Activated T-helper 2 cell treated with anti-CD3 and anti-CD28 coated beads, Interferon-gamma antibody, Interleukin-2, Interleukin-4, amounts not matched to agents 10 μg/mL and 5 μg/mL and 100 μg/mL, durations not matched to agents 14 hours and 24 hours and 36 hours (primary cell): ENCODE measurements at regions of chr5 and their contacts with region 1.

Region 1: GRCh38 chr5:39714036-39714698 is 289.4 kb upstream of the DAB2 start:
- DNase-seq: no peak
- H3K4me3 Mint-ChIP-seq: no peak overlapping the region
- H3K27ac Mint-ChIP-seq: no peak overlapping the region
- H3K4me1 Mint-ChIP-seq: no peaks in the 10 kb centered on the region
- H3K27me3 Mint-ChIP-seq: peaks cover 10% of the 10 kb centered on the region

Region 2: DNA sequence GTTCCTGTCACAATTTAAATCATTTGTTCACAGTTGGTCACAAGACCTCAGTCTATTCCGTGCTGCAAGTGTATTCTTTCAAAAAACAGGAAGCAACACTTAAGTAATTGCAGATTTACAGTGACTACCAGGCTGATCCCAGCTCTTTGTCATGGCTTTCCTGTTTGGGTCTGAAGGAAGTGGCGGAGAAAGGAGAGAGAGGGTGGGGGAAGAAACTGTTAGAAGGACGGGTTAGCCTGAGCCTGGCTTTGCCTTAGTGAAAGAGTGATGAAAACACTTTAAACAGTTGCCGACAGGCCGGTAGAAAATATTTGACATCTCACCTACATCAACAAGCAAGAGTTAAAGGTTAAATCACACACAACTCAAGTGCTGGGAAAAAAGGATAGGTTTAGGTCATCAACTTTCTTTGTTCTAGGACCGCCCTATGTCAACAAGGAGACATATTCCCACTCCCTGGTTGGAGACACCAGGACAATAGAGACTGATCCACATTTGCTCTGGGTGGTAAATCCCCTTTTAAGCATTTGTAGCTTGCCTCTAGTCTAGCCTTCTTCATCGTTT is 187.2 kb before region 1 on chr5:
- intact Hi-C with region 1: no loop called
- DNase-seq: no peak
- H3K4me3 Mint-ChIP-seq: no peak overlapping the region
- H3K27ac Mint-ChIP-seq: no peak overlapping the region
- H3K4me1 Mint-ChIP-seq: no peaks in the 10 kb centered on the region
- H3K27me3 Mint-ChIP-seq: peaks cover 20% of the 10 kb centered on the region

Region 3: GRCh38 chr5:39578887-39579497 is 135.2 kb before region 1 on chr5:
- intact Hi-C with region 1: loop called (anchors 5 kb)
- DNase-seq: no peak
- H3K4me3 Mint-ChIP-seq: no peak overlapping the region
- H3K27ac Mint-ChIP-seq: no peak overlapping the region
- H3K4me1 Mint-ChIP-seq: peaks cover 2% of the 10 kb centered on the region
- H3K27me3 Mint-ChIP-seq: peaks cover 20% of the 10 kb centered on the region

Region 4: GRCh38 chr5:39671561-39671961 is 42.6 kb before region 1 on chr5:
- intact Hi-C with region 1: no loop called
- DNase-seq: no peak
- H3K4me3 Mint-ChIP-seq: no peak overlapping the region
- H3K27ac Mint-ChIP-seq: no peak overlapping the region
- H3K4me1 Mint-ChIP-seq: no peaks in the 10 kb centered on the region
- H3K27me3 Mint-ChIP-seq: peaks cover 39% of the 10 kb centered on the region

Region 5: DNA sequence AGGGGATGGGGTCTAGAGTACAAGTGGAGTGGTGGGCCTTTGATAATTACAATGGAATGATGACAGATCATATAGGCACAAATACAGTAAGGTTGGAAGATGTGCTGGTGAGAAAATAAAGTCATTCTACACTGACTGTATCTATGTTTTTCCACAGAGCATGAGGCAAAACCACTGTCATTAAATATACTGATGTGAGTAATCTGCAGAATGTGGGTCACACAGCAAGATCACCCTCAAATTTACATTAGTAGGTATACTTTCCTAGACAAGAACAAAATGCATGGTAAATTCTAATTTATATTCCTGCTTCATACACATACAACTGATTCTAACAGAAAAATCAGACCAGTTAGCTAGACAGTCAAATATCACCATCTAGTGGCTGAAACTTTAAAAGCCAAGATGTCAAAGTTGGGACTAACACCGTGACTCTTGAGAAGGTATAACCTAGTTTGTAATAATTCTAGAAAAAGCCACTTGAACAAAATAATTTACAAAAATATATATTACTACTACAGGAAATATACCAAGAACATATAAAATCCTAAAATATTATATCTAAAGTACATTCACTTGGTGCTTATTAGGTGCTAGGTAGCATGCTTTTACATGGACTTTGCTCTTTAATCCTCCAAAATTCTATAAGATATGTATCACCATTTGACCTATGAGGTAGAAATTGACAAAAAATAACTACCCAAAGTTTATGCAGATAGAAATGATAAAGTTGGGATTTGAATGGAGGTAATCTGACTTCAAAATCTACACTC is 1022.1 kb after region 1 on chr5:
- intact Hi-C with region 1: loop called (anchors 1 kb)
- DNase-seq: no peak
- H3K4me3 Mint-ChIP-seq: no peak overlapping the region
- H3K27ac Mint-ChIP-seq: peak overlapping the region; percentile 17
- H3K4me1 Mint-ChIP-seq: peaks cover 28% of the 10 kb centered on the region
- H3K27me3 Mint-ChIP-seq: no peaks in the 10 kb centered on the region

Region 6: GRCh38 chr5:40879163-40879942 is 1165.2 kb after region 1 on chr5:
- intact Hi-C with region 1: loop called (anchors 1 kb)
- DNase-seq: no peak
- H3K4me3 Mint-ChIP-seq: no peak overlapping the region
- H3K27ac Mint-ChIP-seq: no peak overlapping the region
- H3K4me1 Mint-ChIP-seq: peaks cover 4% of the 10 kb centered on the region
- H3K27me3 Mint-ChIP-seq: peaks cover 12% of the 10 kb centered on the region